Activated naive CD4-positive, alpha-beta T cell treated with anti-CD3 and anti-CD28 coated beads for 36 hours (primary cell): ENCODE measurements at regions of chr1 and their contacts with region 1.

Region 1: GRCh38 chr1:168234846-168235547 is 9.2 kb downstream of the SFT2D2 start:
- DNase-seq: peak; percentile 53
- H3K4me3 Mint-ChIP-seq: no peak overlapping the region
- H3K27ac Mint-ChIP-seq: peak overlapping the region; percentile 48
- H3K4me1 Mint-ChIP-seq: peaks cover 41% of the 10 kb centered on the region
- H3K27me3 Mint-ChIP-seq: no peaks in the 10 kb centered on the region

Region 2: DNA sequence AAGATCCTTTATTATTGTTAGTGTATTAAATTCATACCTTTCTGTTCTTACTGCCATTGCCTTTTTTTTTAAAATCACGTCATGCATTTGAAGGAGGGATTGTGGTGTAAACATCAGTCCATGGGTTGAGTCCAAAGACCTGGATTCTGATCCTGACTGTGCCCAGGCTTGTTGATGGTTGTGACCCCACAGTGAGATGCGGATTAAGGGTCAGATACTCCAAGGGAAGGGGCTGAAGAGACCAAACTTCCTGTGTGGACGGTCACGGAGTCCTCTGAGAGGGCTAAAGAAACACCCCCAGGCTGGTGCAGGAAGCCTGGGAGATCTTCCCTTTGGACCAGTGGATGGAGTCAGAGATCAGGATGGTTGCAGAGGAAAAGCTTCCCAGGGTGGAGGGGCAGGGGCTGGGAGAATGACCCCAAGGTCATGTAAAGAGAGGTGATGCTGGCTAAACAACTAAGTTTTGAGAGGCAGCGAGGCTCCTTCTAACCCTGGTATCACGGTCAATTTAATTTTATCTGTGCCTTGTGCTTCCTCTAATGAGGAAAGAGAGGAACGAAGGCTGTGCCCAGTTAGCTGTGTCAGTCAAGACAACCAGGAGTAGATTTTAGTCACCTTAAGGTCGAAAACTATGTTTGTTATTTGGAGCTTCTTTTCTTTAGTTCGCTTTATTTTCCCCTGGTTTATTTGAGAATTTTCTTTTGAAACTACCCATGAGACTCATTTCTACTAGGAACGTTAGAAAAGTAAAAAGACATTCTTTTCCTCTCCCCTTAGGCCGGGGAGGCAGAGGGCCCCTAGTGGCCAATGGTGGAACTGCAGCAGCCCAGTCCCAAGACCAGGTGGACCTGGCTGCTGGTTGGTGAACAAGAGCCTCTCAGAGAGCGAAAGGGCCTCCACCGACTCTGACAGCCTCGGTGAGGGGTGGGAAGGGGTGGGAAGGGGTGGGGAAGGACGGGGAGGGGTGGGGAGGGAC is 89.5 kb before region 1 on chr1:
- CTCF ChIA-PET with region 1: interaction called, 4 read pairs
- intact Hi-C with region 1: loop called (anchors 1 kb)
- DNase-seq: peak; percentile 94
- H3K4me3 Mint-ChIP-seq: no peak overlapping the region
- H3K27ac Mint-ChIP-seq: no peak overlapping the region
- H3K4me1 Mint-ChIP-seq: peaks cover 15% of the 10 kb centered on the region
- H3K27me3 Mint-ChIP-seq: no peaks in the 10 kb centered on the region

Region 3: DNA sequence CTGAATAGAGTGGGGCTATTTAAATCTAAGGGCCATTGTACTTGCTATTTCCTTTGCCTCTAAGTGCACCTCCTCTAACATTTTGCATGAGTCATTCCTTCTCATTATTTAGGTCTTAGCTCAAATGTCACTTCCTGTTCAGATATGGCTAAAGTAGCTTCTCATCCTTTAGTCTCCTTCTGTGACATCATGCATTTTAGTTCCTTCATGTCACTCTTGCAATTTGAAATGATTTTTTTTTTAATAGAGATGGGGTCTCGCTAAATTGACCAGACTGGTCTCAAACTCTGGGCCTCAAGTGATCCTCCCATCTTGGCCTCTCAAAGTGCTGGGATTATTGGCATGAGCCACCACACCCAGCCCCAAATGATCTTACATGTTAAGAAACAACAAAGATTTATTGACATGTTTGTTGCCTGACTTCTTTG is 52.3 kb after region 1 on chr1:
- CTCF ChIA-PET with region 1: interaction called, 4 read pairs
- intact Hi-C with region 1: loop called (anchors 5 kb)
- DNase-seq: no peak
- H3K4me3 Mint-ChIP-seq: no peak overlapping the region
- H3K27ac Mint-ChIP-seq: no peak overlapping the region
- H3K4me1 Mint-ChIP-seq: peaks cover 20% of the 10 kb centered on the region
- H3K27me3 Mint-ChIP-seq: no peaks in the 10 kb centered on the region

Region 4: DNA sequence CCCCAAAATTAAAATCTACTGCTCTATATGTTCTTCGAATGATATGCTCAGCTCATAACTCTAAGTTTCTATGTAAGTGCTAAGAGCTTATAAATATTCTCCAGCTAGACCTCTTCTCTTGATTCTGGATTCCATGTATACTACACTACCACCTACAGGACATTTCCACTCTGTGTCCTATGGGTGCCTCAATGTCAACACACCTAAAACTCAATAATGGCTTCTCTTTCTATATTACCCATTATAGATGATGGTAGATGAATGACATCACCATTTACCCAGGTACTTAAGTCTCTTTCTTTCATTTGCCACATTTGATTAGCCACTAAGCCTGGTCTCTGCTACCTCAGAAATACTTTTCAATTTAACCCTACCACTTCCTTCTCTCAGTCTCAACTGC is 86.9 kb after region 1 on chr1:
- CTCF ChIA-PET with region 1: interaction called, 7 read pairs
- intact Hi-C with region 1: loop called (anchors 1 kb)
- DNase-seq: no peak
- H3K4me3 Mint-ChIP-seq: no peak overlapping the region
- H3K27ac Mint-ChIP-seq: no peak overlapping the region
- H3K4me1 Mint-ChIP-seq: peaks cover 4% of the 10 kb centered on the region
- H3K27me3 Mint-ChIP-seq: no peaks in the 10 kb centered on the region

Region 5: DNA sequence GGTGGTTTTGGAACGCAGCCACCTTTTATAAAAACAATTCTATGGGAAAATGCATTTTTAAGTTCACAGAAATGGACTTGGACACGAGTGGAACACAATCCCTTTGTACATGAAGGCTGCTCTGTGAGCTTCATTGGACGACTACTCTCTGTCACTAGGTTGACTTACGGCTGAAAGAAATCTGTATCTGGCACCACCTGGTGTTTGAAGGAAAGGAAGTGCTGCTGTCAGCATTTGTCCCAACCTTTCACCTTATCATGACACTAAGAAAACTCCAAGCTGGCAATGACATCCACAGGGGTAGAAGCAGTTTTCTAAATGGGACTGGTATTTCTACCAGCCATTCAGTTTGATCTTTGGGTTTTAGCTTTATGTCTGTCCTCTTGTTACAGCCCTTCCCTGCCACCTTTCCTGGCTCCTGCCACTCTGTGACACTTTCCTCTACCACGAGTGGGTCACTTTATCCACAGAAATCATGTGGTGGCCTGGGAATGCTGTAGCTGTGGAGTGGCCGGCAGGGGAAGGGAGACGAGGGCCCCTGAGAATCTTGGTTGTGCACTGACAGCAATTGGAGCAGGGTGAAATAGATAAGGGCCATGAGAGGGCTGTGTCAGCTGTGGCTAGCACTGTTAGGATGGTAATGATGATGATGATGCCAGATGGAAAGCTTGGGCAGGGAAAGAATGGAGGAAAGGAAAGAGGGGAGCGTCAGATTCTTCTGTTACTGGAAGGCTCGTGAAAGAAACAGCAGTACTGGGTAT is 130.9 kb after region 1 on chr1:
- CTCF ChIA-PET with region 1: interaction called, 5 read pairs
- intact Hi-C with region 1: loop called (anchors 2 kb)
- DNase-seq: peak; percentile 22
- H3K4me3 Mint-ChIP-seq: no peak overlapping the region
- H3K27ac Mint-ChIP-seq: no peak overlapping the region
- H3K4me1 Mint-ChIP-seq: peaks cover 9% of the 10 kb centered on the region
- H3K27me3 Mint-ChIP-seq: peaks cover 3% of the 10 kb centered on the region

Region 6: GRCh38 chr1:169681140-169681539 is 1446.1 kb after region 1 on chr1:
- CTCF ChIA-PET with region 1: no interaction called
- intact Hi-C with region 1: no loop called
- DNase-seq: no peak
- H3K4me3 Mint-ChIP-seq: peak overlapping the region; percentile 53
- H3K27ac Mint-ChIP-seq: peak overlapping the region; percentile 90
- H3K4me1 Mint-ChIP-seq: peaks cover 55% of the 10 kb centered on the region
- H3K27me3 Mint-ChIP-seq: no peaks in the 10 kb centered on the region